ENCODE measurements at regions of chr12 and their contacts with region 1.

Region 1: DNA sequence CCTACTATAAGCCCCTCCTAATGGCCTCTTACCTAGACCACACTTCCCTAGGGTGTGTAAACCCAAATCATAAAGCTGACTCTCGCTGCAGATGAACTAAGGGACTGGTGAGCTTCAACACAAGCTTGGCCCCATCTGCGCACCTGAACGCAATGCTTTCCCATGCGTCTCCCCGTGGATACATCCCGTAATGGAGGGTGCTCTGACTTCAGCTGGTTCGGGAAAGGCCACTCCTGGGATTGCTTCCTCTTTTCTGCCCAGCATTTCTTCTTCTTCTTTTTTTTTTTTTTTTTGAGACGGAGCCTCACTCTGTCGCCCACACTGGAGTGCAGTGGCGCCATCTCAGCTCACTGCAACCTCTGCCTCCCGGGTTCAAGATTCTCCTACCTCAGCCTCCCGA is 27.7 kb upstream of the ETFBKMT start:
- DNase-seq: no peak
- H3K4me3 ChIP-seq: no peak overlapping the region
- H3K27ac ChIP-seq: no peak overlapping the region
- H3K27me3 ChIP-seq: no peaks in the 10 kb centered on the region
- CTCF ChIP-seq: no peak

Region 2: GRCh38 chr12:31245822-31246469 is 385.8 kb before region 1 on chr12:
- intact Hi-C with region 1: loop called in 1 of 2 experiments (anchors 5 kb)
- DNase-seq: no peak
- H3K4me3 ChIP-seq: no peak overlapping the region
- H3K27ac ChIP-seq: no peak overlapping the region
- H3K27me3 ChIP-seq: peaks cover 0 to 3% (median 0%) of the 10 kb centered on the region in 45 donors
- CTCF ChIP-seq: no peak

Region 3: GRCh38 chr12:31274520-31275300 is 357.1 kb before region 1 on chr12:
- intact Hi-C with region 1: no loop called
- DNase-seq: no peak
- H3K4me3 ChIP-seq: no peak overlapping the region
- H3K27ac ChIP-seq: no peak overlapping the region
- H3K27me3 ChIP-seq: no peaks in the 10 kb centered on the region
- CTCF ChIP-seq: no peak

Region 4: GRCh38 chr12:31558521-31558920 is 73.3 kb before region 1 on chr12:
- intact Hi-C with region 1: no loop called
- DNase-seq: no peak
- H3K4me3 ChIP-seq: no peak overlapping the region
- H3K27ac ChIP-seq: no peak overlapping the region
- H3K27me3 ChIP-seq: no peaks in the 10 kb centered on the region
- CTCF ChIP-seq: no peak

Region 5: DNA sequence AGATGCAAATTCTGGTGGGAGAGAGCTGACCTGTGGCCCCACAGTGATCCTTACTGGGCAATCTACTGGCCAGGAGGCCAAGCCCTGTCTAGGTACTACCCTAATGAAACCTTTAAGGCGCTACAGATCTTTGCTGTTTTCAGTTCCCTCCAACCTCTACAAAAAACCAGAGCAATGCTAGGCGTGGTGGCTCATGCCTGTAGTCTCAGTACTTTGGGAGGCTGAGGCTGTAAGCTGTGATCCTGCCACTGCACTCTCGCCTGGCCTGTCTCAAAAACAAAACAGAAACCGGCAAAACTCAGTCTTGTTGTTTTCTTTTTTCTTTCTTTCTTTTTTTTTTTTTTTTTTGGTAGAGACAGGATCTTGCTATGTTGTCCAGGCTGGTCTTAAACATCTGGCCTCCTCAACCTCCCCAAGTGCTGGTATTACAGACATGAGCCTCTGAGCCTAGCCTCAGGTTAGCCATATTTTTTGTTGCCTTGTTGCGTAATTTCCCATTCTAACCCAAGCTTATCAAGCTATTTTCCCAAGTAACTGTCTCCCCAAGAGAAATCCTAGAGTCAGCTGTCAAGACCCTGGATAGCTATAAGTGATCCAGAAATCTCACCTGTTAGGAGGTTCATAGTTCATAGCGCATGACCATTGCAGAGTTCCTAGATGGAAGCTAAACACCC is 30.5 kb after region 1 on chr12:
- intact Hi-C with region 1: no loop called
- DNase-seq: no peak
- H3K4me3 ChIP-seq: no peak overlapping the region
- H3K27ac ChIP-seq: no peak overlapping the region
- H3K27me3 ChIP-seq: no peaks in the 10 kb centered on the region
- CTCF ChIP-seq: no peak

Region 6: GRCh38 chr12:31702047-31702446 is 70.3 kb after region 1 on chr12:
- intact Hi-C with region 1: no loop called
- DNase-seq: no peak
- H3K4me3 ChIP-seq: no peak overlapping the region
- H3K27ac ChIP-seq: peak overlapping the region in 1 of 59 donors; percentile 39
- H3K27me3 ChIP-seq: no peaks in the 10 kb centered on the region
- CTCF ChIP-seq: peak in 4 of 56 donors; percentile 7 to 29 (median 16)